ENCODE measurements at regions of chr20 and their contacts with region 1.

Region 1: DNA sequence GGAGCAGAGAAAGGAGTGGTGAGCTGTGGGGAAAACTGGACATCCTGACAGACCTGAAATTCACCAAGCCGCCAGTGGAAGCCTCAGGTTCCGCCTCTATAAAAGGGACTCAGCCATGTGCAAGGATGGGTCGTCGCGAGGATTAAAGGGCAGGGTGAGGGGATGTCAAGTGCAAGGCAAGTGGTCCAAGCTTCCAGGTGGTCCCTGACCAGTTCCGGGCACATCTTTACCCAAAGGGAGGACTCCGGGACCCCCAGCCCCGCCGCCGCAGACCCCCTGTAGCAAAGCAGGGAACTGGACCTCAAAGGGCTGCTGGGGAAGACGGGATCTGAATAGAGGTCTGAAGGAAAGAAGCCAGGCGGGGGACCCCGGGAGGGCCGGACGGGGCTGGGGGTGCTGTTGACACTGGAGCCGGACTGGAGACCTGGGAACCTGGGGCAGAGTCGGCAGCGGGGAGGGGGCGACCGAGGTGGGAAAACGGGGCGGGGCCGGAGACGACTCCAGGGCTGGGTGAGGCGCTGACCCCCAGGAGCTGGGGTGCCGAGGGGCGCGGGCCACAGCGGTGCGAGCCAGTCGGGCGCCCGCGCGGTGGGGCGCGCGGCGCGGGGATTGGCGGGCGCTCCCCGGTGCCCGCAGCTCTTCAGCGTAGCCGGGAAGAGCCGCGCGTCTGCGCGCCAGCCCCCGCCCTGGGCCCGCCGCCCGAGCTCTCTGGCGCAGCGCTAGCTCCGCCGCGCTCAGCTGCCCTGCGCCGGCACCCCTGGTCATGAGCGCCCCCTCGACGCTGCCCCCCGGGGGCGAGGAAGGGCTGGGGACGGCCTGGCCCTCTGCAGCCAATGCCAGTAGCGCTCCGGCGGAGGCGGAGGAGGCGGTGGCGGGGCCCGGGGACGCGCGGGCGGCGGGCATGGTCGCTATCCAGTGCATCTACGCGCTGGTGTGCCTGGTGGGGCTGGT is at the start of gene SSTR4:
- DNase-seq: no peak
- H3K4me3 ChIP-seq: peak within 1 kb of the TSS; percentile 1 to 52 (median 22)
- H3K27ac ChIP-seq: no peak within 1 kb of the TSS
- H3K4me1 ChIP-seq: peaks cover 0 to 9% (median 0%) of the 10 kb centered on the region in 3 donors
- H3K27me3 ChIP-seq: peaks cover 0 to 82% (median 10%) of the 10 kb centered on the region in 4 donors
- CTCF ChIP-seq: no peak
- POLR2A ChIP-seq: no peak
- total RNA-seq, gene SSTR4: not detected

Region 2: DNA sequence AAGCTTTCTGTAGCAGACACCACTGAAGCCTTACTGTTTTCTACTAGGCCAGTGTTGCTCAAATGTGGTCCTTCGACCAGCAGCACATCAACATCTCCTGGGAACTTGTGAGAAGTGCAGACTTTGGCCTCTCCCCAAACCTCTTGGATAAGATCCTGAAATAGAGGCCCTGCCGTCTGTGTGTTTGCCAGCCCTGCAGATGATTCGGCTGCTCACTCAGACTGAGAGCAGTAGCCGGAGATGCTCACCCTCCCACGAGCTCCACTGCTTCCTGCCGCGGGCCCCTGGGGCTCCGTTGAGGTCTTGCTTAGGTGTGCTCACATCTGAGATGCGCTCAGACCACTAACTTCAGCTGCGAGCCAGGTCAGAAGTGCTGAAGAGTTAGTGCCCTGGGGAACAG is 129.3 kb before region 1 on chr20:
- intact Hi-C with region 1: no loop called
- DNase-seq: no peak
- H3K4me3 ChIP-seq: no peak overlapping the region
- H3K27ac ChIP-seq: no peak overlapping the region
- H3K4me1 ChIP-seq: no peaks in the 10 kb centered on the region
- H3K27me3 ChIP-seq: peaks cover 0 to 8% (median 0%) of the 10 kb centered on the region in 4 donors
- CTCF ChIP-seq: no peak
- POLR2A ChIP-seq: no peak

Region 3: DNA sequence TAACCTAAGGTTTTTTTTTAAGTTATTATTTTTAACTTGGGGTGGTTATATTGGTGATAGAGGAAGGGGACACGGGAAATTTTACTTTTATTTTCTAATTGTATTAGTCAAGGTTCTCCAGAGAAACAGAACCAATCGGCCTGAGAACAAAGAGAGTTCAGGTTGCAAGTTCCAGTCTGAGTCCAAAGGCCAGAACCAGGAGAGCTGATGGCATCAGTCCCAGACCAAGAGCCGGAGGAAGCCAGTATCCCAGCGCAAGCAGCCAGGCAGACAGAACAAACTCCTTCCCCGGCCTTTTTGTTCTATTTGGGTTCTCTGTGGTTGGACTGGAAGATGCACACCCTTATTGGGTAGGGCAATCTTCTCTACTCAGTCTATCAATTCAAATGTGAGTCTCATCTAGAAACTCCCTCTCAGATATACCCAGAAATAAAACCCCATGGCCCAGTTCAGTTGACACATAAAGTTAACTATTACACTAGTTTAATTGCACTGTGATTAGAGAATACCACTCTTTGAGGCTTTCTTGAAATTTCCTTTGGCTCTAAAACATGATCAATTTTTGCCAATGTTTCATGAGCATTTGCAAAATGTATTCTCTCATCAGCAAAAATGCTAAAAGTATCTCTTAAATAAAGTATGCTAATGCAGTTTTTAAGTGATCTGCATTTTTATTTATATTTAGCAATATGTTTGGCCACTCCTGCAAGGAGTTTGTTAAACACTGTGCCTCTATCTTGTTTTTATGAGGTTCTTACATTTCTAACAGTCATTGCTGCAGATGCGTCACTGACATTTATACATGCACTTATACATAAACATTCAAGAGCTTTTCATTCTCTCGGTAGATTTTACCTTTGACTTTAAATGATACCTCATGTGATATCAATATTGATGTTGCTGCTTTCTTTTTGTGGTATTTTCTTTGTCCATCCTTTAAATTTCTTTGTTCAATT is 103.1 kb before region 1 on chr20:
- intact Hi-C with region 1: no loop called
- DNase-seq: no peak
- H3K4me3 ChIP-seq: no peak overlapping the region
- H3K27ac ChIP-seq: no peak overlapping the region
- H3K4me1 ChIP-seq: no peaks in the 10 kb centered on the region
- H3K27me3 ChIP-seq: no peaks in the 10 kb centered on the region
- CTCF ChIP-seq: no peak
- POLR2A ChIP-seq: no peak

Region 4: DNA sequence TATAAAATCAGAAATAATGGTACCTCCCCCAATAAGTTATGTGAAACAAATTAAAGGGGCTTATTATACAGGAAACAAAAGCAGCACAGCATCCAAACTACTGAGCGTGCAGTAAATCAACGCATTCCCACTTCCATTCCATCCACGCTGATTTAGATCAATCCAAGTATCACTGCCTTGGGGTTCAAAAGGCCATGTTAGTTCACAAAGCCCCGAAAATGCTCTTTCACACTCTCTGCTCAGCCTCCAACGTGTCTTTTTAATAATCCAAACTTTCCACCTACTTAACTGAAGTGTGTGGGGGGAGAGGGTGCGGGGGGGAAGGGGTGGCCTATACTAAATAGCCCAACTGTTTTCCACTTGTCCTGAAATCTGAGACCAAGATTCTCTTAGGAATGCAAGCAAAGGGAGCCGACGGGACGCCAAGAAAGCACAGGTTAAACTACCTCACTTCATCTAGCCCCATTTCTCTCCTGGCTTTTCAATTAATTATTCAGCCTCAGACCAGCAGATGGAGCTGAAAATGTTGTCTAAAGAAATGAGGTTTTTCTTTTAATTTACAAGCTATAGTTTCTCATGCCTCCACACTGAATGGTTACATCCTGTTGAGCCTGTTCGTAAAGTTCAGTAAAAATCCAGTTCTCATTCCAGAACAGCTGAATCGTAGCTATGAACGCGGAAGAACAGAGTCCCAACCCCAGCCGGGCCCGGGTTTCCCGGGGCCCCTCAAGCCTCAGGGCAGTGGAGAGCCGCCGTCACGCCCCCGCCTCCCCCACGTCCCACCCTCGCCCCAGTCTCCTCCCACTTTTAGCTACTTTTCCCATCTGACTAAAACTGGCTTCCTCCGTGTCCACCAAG is 314.6 kb after region 1 on chr20:
- intact Hi-C with region 1: loop called (anchors 10 kb)
- DNase-seq: peak; percentile 67
- H3K4me3 ChIP-seq: peak overlapping the region; percentile 76 to 84 (median 82)
- H3K27ac ChIP-seq: peak overlapping the region; percentile 95 to 99 (median 98)
- H3K4me1 ChIP-seq: peaks cover 14 to 41% (median 19%) of the 10 kb centered on the region in 3 donors
- H3K27me3 ChIP-seq: no peaks in the 10 kb centered on the region
- CTCF ChIP-seq: peak in 5 of 6 experiments; percentile 37 to 60 (median 52)
- POLR2A ChIP-seq: no peak

Measured in esophagus squamous epithelium (tissue), 5 donors.